ENCODE measurements at regions of chr9 and their contacts with region 1.

Region 1: DNA sequence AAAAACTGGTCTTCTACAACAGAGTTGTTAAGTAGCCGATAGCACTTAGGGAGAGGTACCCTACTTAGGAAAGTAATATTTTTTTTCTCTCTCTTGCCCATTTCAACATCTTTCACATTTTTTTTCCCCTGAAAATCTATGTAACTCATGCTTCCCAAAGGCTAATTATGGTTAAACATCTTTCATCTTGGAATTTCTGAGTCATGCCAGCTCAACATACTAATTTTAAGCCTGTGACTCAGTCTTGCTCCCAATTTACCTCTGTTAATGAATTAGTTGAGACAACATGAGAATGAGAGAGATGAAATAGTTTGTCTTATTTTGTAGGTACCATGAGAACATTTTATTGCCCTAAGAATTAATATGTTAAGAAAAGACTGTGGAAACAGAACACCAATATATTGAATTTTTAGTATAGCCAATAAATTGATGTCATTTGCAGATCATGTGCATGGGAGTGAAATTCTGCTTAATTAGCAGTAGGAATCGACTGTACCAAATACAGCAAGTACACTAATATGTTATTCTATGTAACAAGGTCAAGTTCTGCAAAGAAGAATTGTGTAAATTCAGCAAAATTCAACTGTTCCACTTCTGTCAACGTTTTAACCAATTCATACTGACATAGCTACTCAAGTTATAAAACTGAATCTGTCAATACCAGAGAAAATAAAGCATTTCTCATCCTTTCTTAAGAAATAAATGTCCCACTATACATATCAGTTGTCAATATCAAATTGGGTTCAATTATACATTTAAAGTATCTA is 550.0 kb downstream of the PTPRD start:
- DNase-seq: no peak
- ATAC-seq: no peak
- H3K4me3 ChIP-seq: no peak overlapping the region
- H3K27ac ChIP-seq: no peak overlapping the region
- H3K4me1 ChIP-seq: no peaks in the 10 kb centered on the region
- H3K27me3 ChIP-seq: no peaks in the 10 kb centered on the region
- CTCF ChIP-seq: no peak

Region 2: GRCh38 chr9:9920425-9921060 is 142.3 kb before region 1 on chr9:
- CTCF ChIA-PET with region 1: no interaction called
- POLR2A ChIA-PET with region 1: no interaction called
- in situ Hi-C with region 1: no loop called
- intact Hi-C with region 1: no loop called
- DNase-seq: no peak
- ATAC-seq: no peak
- H3K4me3 ChIP-seq: no peak overlapping the region
- H3K27ac ChIP-seq: no peak overlapping the region
- H3K4me1 ChIP-seq: no peaks in the 10 kb centered on the region
- H3K27me3 ChIP-seq: no peaks in the 10 kb centered on the region
- CTCF ChIP-seq: no peak

Region 3: GRCh38 chr9:10268531-10269485 is 206.0 kb after region 1 on chr9:
- CTCF ChIA-PET with region 1: no interaction called
- POLR2A ChIA-PET with region 1: no interaction called
- in situ Hi-C with region 1: no loop called
- intact Hi-C with region 1: loop called (anchors 10 kb)
- DNase-seq: no peak
- ATAC-seq: no peak
- H3K4me3 ChIP-seq: no peak overlapping the region
- H3K27ac ChIP-seq: no peak overlapping the region
- H3K4me1 ChIP-seq: no peaks in the 10 kb centered on the region
- H3K27me3 ChIP-seq: no peaks in the 10 kb centered on the region
- CTCF ChIP-seq: peak; percentile 24

Measured in Panc1 (cell line).